ENCODE measurements at regions of chr3 and their contacts with region 1.

Region 1: GRCh38 chr3:41900265-41900664 is 61.6 kb downstream of the ULK4 start:
- DNase-seq: no peak
- H3K4me3 ChIP-seq: no peak overlapping the region
- H3K4me1 ChIP-seq: no peaks in the 10 kb centered on the region
- H3K27me3 ChIP-seq: no peaks in the 10 kb centered on the region

Region 2: DNA sequence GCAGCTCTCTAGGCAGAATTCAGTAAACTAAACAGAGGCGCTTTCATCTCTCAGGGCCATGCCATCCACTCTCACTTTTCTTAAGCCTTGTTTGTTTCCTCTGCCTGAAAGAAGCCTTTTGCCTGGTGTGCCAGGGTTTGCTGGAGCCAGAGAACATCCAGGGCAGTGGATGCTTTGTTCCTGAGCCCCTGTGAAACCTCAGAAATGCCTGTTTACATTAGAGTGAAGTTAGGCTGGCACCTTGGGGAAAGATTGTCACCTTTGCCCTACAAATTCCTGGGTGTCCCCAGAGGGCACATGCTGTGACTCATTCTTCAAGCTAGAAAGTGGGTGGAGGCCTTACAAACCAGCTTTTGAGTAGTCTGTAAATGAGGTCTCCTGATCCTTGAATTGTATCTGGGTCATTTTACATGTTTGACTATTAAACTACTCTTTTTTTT is 180.2 kb after region 1 on chr3:
- in situ Hi-C with region 1: loop called (anchors 10 kb)
- DNase-seq: no peak
- H3K4me3 ChIP-seq: no peak overlapping the region
- H3K4me1 ChIP-seq: peaks cover 6% of the 10 kb centered on the region
- H3K27me3 ChIP-seq: no peaks in the 10 kb centered on the region

Measured in HAP-1 (cell line).